HepG2 (cell line): ENCODE measurements at regions of chr4 and their contacts with region 1.

Region 1: DNA sequence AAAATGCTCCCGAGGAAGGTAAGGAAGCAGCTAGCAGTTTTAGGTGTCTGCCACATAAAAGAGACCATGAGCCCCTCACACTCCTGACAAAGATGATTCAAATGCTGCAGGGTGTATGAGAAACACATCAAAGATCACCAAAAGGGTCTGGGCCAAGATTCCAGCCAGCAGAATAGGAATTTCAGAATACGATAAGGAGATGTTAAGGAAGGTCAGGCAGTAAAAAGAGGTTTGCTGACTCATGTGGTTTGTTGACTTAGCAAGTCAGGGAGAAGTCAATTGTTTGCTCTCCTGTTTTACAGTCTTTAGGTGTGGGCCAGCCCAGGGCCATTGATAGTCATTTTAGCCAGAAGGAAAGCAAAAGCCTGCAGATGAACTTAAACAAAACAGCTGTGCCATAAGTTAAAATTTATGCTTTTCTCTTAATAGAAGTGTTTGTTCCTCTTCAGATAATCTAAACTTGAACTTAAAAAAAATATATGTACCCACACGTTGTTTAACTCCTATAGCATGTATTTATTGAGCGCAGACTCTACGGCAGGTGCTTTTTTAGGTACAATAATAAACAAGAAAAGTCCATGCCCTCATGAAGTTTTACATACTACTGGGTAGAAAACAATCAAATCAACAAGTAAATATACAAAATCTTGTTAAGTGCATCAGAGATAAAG is 115.6 kb downstream of the CAMK2D start:
- DNase-seq: peak; percentile 81
- ATAC-seq: peak; percentile 90
- H3K4me3 ChIP-seq: no peak overlapping the region; a peak in 1 of 6 replicates
- H3K27ac ChIP-seq: peak overlapping the region; percentile 69
- H3K4me1 ChIP-seq: peaks cover 63% of the 10 kb centered on the region
- H3K27me3 ChIP-seq: no peaks in the 10 kb centered on the region
- CTCF ChIP-seq: no peak
- EP300 ChIP-seq: peak in 1 of 2 experiments; percentile 67; a peak in 2 of 4 replicates
- POLR2A ChIP-seq: no peak
- RAD21 ChIP-seq: no peak

Region 2: GRCh38 chr4:113300471-113300928 is 345.4 kb before region 1 on chr4:
- CTCF ChIA-PET with region 1: no interaction called
- POLR2A ChIA-PET with region 1: no interaction called
- in situ Hi-C with region 1: no loop called
- intact Hi-C with region 1: no loop called
- DNase-seq: peak; percentile 4
- ATAC-seq: no peak
- H3K4me3 ChIP-seq: no peak overlapping the region
- H3K27ac ChIP-seq: no peak overlapping the region
- H3K4me1 ChIP-seq: no peaks in the 10 kb centered on the region
- H3K27me3 ChIP-seq: no peaks in the 10 kb centered on the region
- CTCF ChIP-seq: no peak
- EP300 ChIP-seq: no peak
- POLR2A ChIP-seq: no peak
- RAD21 ChIP-seq: no peak

Region 3: DNA sequence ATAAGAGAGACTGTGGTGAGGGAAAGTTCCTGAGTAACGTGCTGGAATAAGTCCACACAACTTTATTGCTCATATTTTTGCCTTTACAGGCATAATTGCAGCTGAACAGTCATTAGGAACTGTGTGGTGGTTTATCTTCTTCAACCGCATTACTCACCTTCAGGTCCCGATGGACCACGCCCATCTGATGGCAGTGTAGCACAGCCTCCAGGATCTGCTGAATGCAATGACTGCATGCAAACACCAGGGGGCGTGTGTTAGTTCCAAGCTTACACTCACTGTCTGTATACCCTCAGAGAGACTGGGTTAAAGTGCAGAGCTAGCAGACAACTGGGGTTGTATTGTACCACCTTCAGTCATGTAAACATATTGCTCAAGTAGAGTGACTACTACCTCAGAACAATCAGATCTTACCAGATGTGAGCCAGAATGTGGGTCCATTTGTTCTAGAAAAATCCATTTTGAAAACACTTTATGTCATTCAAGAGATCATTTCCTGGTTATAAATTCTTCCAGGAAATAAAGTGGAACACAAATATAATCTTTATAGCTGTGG is 98.3 kb before region 1 on chr4:
- CTCF ChIA-PET with region 1: no interaction called
- POLR2A ChIA-PET with region 1: no interaction called
- in situ Hi-C with region 1: no loop called
- intact Hi-C with region 1: loop called (anchors 5 kb)
- DNase-seq: peak; percentile 97
- ATAC-seq: peak; percentile 100
- H3K4me3 ChIP-seq: no peak overlapping the region
- H3K27ac ChIP-seq: peak overlapping the region; percentile 32
- H3K4me1 ChIP-seq: peaks cover 22% of the 10 kb centered on the region
- H3K27me3 ChIP-seq: no peaks in the 10 kb centered on the region
- CTCF ChIP-seq: peak; percentile 98
- EP300 ChIP-seq: peak in 1 of 2 experiments; percentile 62; a peak in 2 of 4 replicates
- POLR2A ChIP-seq: no peak
- RAD21 ChIP-seq: peak; percentile 87

Region 4: DNA sequence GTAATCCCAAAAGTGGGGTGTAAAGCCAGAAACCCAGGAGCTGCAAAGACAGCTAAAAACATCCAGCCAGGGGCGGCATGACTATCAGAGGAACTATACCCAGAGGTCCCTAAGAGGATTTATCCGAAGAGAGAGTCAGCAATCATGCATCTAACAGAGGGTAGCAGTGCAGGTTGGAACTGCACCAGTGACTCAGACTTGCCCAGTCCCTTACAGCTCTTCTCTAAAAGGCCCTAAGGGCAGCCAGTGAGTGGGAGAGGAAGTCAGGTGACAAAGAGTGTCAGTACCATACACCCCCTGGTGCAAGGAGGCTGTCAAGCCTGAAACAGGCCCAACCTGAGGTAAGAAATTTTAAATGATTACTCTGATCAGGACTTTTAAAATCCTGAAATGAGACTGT is 27.5 kb after region 1 on chr4:
- CTCF ChIA-PET with region 1: no interaction called
- POLR2A ChIA-PET with region 1: no interaction called
- in situ Hi-C with region 1: no loop called
- intact Hi-C with region 1: loop called (anchors 1 kb)
- DNase-seq: no peak
- ATAC-seq: peak; percentile 68; the same call in 2 of the 3 replicates
- H3K4me3 ChIP-seq: no peak overlapping the region
- H3K27ac ChIP-seq: no peak overlapping the region
- H3K4me1 ChIP-seq: peaks cover 18% of the 10 kb centered on the region
- H3K27me3 ChIP-seq: no peaks in the 10 kb centered on the region
- CTCF ChIP-seq: no peak
- EP300 ChIP-seq: no peak
- POLR2A ChIP-seq: no peak
- RAD21 ChIP-seq: no peak

Region 5: GRCh38 chr4:113684534-113685091 is 38.7 kb after region 1 on chr4:
- CTCF ChIA-PET with region 1: no interaction called
- POLR2A ChIA-PET with region 1: interaction called, 4 read pairs
- in situ Hi-C with region 1: no loop called
- intact Hi-C with region 1: loop called (anchors 5 kb)
- DNase-seq: peak; percentile 85
- ATAC-seq: peak; percentile 100
- H3K4me3 ChIP-seq: no peak overlapping the region
- H3K27ac ChIP-seq: no peak overlapping the region
- H3K4me1 ChIP-seq: peaks cover 42% of the 10 kb centered on the region
- H3K27me3 ChIP-seq: no peaks in the 10 kb centered on the region
- CTCF ChIP-seq: peak; percentile 55
- EP300 ChIP-seq: no peak
- POLR2A ChIP-seq: no peak
- RAD21 ChIP-seq: peak; percentile 52